ENCODE measurements at regions of chr14 and their contacts with region 1.

Region 1: GRCh38 chr14:20413045-20413799 is at the start of gene TEP1:
- DNase-seq: peak; percentile 65 to 83
- H3K4me3 ChIP-seq: peak within 1 kb of the TSS; percentile 74
- H3K27ac ChIP-seq: peak within 1 kb of the TSS; percentile 76
- H3K4me1 ChIP-seq: peaks cover 7% of the 10 kb centered on the region; the same call in 1 of the 2 replicates
- H3K27me3 ChIP-seq: no peaks in the 10 kb centered on the region
- CTCF ChIP-seq: no peak
- total RNA-seq, gene TEP1: 18.4 and 20.4 TPM in 2 replicates

Region 2: GRCh38 chr14:20327005-20327869 is 86.0 kb before region 1 on chr14:
- CTCF ChIA-PET with region 1: no interaction called
- POLR2A ChIA-PET with region 1: no interaction called
- intact Hi-C with region 1: loop called (anchors 5 kb)
- DNase-seq: no peak
- H3K4me3 ChIP-seq: no peak overlapping the region
- H3K27ac ChIP-seq: no peak overlapping the region
- H3K4me1 ChIP-seq: peaks cover 8% of the 10 kb centered on the region; the same call in 1 of the 2 replicates
- H3K27me3 ChIP-seq: no peaks in the 10 kb centered on the region
- CTCF ChIP-seq: peak; percentile 71

Region 3: GRCh38 chr14:20400965-20401593 is 12.1 kb before region 1 on chr14:
- CTCF ChIA-PET with region 1: no interaction called
- POLR2A ChIA-PET with region 1: interaction called, 8 read pairs
- intact Hi-C with region 1: loop called (anchors 1 kb)
- DNase-seq: peak; percentile 55 to 91
- H3K4me3 ChIP-seq: peak overlapping the region; percentile 26; the same call in 1 of the 2 replicates
- H3K27ac ChIP-seq: peak overlapping the region; percentile 85
- H3K4me1 ChIP-seq: peaks cover 26% of the 10 kb centered on the region
- H3K27me3 ChIP-seq: no peaks in the 10 kb centered on the region
- CTCF ChIP-seq: no peak

Region 4: DNA sequence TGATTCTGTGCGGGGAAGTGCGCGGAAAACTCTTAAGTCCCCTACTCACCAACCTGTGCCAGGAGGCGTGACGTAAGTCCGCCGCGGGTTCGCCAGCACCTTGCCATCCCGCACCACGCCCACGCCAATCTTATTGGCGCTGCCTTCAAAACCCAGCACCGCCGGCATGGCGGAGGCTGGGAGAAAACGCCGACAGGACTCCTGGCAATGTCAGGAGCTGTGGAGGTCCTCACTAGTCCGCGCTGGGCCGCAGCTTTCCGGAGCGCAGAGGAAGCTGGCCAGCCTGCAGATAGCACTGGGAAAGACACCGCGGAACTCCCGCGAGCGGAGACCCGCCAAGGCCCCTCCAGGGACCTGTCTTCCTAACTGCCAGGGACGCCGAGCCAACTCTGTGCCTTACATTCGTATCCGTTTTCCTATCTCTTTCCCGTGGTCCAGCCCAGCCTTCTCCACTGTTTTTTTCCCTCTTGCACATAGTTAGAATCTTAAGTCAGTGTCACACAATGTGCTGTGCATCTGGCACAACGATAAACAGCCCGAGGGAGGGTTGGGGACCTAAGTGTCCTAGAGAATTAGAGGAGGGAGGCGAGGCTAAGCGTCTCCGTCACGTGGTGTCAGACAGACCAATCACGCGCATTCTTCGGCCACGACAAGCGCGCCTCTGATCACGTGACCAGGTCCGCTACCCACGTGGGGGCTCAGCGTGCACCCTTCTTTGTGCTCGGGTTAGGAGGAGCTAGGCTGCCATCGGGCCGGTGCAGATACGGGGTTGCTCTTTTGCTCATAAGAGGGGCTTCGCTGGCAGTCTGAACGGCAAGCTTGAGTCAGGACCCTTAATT is 41.5 kb after region 1 on chr14 and contains the starts of genes APEX1 and OSGEP:
- CTCF ChIA-PET with region 1: interaction called, 5 read pairs
- POLR2A ChIA-PET with region 1: interaction called, 6 read pairs
- intact Hi-C with region 1: loop called (anchors 1 kb)
- DNase-seq: peak; percentile 91 to 92
- H3K4me3 ChIP-seq: peak within 1 kb of the TSS; percentile 77
- H3K27ac ChIP-seq: peak within 1 kb of the TSS; percentile 72
- H3K4me1 ChIP-seq: peaks cover 16% of the 10 kb centered on the region
- H3K27me3 ChIP-seq: no peaks in the 10 kb centered on the region
- CTCF ChIP-seq: no peak
- total RNA-seq, gene APEX1: 107 and 113 TPM in 2 replicates
- total RNA-seq, gene OSGEP: 17.2 and 20.6 TPM in 2 replicates

Region 5: GRCh38 chr14:20461274-20462001 is 48.2 kb after region 1 on chr14 and contains the start of gene PIP4P1:
- CTCF ChIA-PET with region 1: no interaction called
- POLR2A ChIA-PET with region 1: interaction called, 12 read pairs
- intact Hi-C with region 1: no loop called
- DNase-seq: peak; percentile 92 to 99
- H3K4me3 ChIP-seq: peak within 1 kb of the TSS; percentile 74
- H3K27ac ChIP-seq: peak within 1 kb of the TSS; percentile 64
- H3K4me1 ChIP-seq: peaks cover 15% of the 10 kb centered on the region
- H3K27me3 ChIP-seq: no peaks in the 10 kb centered on the region
- CTCF ChIP-seq: no peak
- total RNA-seq, gene PIP4P1: 20.1 and 22.2 TPM in 2 replicates

Region 6: DNA sequence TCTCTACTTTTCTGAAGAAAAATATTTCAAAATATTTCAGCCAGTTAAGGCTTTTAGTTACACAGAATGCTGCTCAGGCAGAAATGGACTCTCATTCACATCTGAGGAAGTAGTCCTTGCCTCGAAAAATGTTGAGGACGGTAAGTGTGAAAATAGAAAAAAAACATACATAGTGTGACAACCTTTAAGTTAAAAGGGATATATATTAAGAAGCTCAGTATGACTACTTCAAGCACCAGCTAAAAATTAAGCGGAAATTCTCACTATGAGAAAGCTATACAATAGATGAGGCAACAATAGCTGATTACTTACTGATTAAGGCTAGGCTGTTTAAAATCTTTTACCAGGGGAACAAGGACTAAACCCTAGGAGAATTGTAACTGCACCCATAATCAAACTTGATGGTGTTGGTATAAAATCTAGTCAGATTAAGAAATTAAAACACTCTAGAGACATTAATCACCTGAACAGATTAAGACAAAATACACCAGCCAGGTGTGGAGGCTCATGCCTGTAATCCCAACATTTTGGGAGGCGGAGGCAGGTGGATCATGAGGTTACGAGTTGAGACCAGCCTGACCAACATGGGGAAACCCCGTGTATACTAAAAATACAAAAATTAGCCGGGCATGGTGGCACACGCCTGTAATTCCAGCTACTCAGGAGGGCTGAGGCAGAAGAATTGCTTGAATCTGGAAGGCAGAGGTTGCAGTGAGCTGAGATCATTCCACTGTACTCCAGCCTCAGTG is 802.1 kb after region 1 on chr14:
- CTCF ChIA-PET with region 1: no interaction called
- POLR2A ChIA-PET with region 1: no interaction called
- intact Hi-C with region 1: no loop called
- DNase-seq: no peak
- H3K4me3 ChIP-seq: no peak overlapping the region
- H3K27ac ChIP-seq: peak overlapping the region; percentile 15
- H3K4me1 ChIP-seq: no peaks in the 10 kb centered on the region
- H3K27me3 ChIP-seq: no peaks in the 10 kb centered on the region
- CTCF ChIP-seq: no peak